ENCODE measurements at regions of chr22 and their contacts with region 1.

Region 1: DNA sequence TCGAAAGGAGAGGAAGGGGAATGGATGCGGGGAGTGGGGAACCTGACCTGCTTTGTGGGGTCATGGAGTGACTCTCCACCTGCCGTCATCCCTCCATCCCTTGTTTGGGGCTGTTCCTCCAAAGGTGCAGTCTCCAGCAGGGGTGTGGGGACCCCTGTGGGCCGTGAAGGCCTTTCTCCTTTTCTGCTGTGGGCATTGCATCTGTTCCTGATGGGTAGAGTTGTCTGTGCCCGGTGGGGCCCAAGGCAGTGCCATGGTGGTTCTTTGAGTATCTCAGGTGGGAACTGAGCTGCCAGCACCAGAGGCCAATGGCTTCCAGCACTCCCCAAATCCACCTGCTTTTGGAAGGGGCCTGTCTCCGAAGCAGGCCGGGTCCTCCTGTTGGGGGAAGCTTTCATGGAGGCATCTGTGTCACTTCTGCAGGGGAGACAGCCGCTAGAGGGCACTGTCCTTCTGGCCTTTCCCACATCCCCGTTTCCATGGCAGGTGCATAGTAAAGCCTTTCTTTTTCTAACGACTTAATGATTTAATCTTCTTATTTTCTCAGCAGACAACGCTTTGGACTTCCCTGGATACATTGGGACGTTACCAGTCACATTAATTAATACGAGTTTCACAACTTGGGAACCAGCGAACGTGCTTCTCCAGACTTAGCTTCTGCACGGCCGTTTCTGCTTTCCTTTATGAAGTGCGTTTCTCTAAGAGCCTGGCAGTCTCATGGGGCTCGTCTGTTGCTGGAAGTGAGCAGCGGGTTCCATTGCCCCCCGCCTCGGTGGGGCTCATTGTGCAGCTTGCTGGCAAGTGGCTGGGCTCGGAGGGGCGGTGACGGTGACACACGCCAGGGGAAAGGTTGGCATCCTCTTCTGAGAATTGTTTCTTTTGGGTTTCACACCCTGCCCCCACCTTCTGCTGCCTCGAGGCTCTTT is 57.1 kb downstream of the PARVB start:
- DNase-seq: peak; percentile 31 to 87
- H3K4me3 ChIP-seq: no peak overlapping the region
- H3K27ac ChIP-seq: no peak overlapping the region
- H3K4me1 ChIP-seq: peaks cover 0 to 9% (median 5%) of the 10 kb centered on the region in 4 experiments; a peak in 6 of 7 replicates
- H3K27me3 ChIP-seq: no peaks in the 10 kb centered on the region
- CTCF ChIP-seq: peak; percentile 84 to 92 (median 89)
- EP300 ChIP-seq: no peak
- POLR2A ChIP-seq: no peak
- RAD21 ChIP-seq: peak; percentile 87 to 88

Region 2: DNA sequence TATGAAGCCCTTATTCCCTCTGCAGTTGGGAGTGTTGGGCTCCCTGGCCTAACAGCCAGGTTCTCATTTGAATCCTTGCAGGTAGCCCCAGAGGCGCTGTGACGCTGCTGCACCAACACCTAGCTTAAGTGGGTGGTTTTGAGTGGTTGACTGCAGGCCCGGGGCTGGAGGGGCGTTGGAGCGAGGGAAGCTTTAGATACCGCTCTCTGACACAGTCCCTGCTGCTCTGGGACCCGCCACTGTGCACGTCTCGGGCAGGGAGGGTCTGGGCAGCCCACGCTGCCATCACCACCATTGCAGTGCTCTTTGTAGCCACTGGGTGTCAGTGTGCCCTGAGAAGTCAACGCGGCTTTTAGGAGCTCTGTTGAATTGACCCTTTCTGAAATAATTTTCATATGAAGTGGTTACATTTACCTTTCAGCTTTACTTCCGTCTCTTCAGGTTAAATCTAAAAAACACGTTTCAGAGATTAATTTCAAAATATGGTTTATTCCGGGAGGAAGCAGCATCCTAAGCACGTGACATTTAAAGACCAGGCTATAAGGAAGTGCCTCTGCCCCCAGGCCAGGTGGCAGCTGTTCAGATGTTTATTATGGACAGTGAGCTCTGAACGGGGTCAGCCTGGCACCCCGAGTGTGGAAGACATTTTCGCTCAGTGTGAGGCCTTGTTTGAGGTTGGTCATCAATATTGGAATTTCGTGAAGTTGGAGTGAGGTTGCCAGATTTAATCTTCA is 88.0 kb before region 1 on chr22:
- CTCF ChIA-PET with region 1: interaction called, 100 read pairs
- POLR2A ChIA-PET with region 1: interaction called, 4 read pairs
- DNase-seq: peak; percentile 38 to 82
- H3K4me3 ChIP-seq: no peak overlapping the region
- H3K27ac ChIP-seq: no peak overlapping the region
- H3K4me1 ChIP-seq: peaks cover 0 to 2% (median 1%) of the 10 kb centered on the region in 4 experiments; a peak in 3 of 7 replicates
- H3K27me3 ChIP-seq: no peaks in the 10 kb centered on the region
- CTCF ChIP-seq: peak; percentile 93 to 97 (median 95)
- EP300 ChIP-seq: no peak
- POLR2A ChIP-seq: no peak
- RAD21 ChIP-seq: peak; percentile 94 to 95

Region 3: GRCh38 chr22:44037519-44038370 is 43.5 kb before region 1 on chr22:
- CTCF ChIA-PET with region 1: interaction called, 13 read pairs
- POLR2A ChIA-PET with region 1: interaction called, 3 read pairs
- DNase-seq: no peak
- H3K4me3 ChIP-seq: no peak overlapping the region
- H3K27ac ChIP-seq: no peak overlapping the region
- H3K4me1 ChIP-seq: no peaks in the 10 kb centered on the region
- H3K27me3 ChIP-seq: no peaks in the 10 kb centered on the region
- CTCF ChIP-seq: no peak
- EP300 ChIP-seq: no peak
- POLR2A ChIP-seq: no peak
- RAD21 ChIP-seq: no peak

Region 4: GRCh38 chr22:44098083-44098739 is 17.0 kb after region 1 on chr22:
- CTCF ChIA-PET with region 1: interaction called, 25 read pairs
- POLR2A ChIA-PET with region 1: no interaction called
- DNase-seq: no peak
- H3K4me3 ChIP-seq: no peak overlapping the region
- H3K27ac ChIP-seq: no peak overlapping the region
- H3K4me1 ChIP-seq: peaks cover 0 to 4% (median 0%) of the 10 kb centered on the region in 4 experiments; a peak in 2 of 7 replicates
- H3K27me3 ChIP-seq: no peaks in the 10 kb centered on the region
- CTCF ChIP-seq: no peak
- EP300 ChIP-seq: no peak
- POLR2A ChIP-seq: no peak
- RAD21 ChIP-seq: no peak

Region 5: DNA sequence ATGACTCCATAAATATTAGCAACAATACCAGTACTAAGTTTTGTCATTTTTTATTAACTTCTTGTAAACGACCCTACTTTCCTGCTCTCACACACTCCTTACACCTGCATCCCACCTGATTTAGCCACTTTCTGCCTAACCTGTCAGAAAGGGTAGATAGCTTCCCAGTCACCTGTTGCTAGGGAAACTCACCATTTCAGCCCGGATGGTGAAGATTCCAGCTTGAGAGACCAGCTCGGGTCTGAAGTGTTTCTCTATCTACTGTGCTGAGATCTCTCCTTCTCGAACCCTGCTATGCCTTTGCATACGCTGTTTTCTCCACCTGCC is 99.5 kb after region 1 on chr22 and contains the start of gene PARVG:
- CTCF ChIA-PET with region 1: interaction called, 11 read pairs
- POLR2A ChIA-PET with region 1: no interaction called
- DNase-seq: no peak
- H3K4me3 ChIP-seq: no peak within 1 kb of the TSS
- H3K27ac ChIP-seq: no peak within 1 kb of the TSS
- H3K4me1 ChIP-seq: peaks cover 0 to 12% (median 9%) of the 10 kb centered on the region in 4 experiments; a peak in 5 of 7 replicates
- H3K27me3 ChIP-seq: no peaks in the 10 kb centered on the region
- CTCF ChIP-seq: no peak
- EP300 ChIP-seq: no peak
- POLR2A ChIP-seq: no peak
- RAD21 ChIP-seq: no peak
- total RNA-seq, gene PARVG: 0.37 and 0.50 TPM in 2 replicates

Region 6: DNA sequence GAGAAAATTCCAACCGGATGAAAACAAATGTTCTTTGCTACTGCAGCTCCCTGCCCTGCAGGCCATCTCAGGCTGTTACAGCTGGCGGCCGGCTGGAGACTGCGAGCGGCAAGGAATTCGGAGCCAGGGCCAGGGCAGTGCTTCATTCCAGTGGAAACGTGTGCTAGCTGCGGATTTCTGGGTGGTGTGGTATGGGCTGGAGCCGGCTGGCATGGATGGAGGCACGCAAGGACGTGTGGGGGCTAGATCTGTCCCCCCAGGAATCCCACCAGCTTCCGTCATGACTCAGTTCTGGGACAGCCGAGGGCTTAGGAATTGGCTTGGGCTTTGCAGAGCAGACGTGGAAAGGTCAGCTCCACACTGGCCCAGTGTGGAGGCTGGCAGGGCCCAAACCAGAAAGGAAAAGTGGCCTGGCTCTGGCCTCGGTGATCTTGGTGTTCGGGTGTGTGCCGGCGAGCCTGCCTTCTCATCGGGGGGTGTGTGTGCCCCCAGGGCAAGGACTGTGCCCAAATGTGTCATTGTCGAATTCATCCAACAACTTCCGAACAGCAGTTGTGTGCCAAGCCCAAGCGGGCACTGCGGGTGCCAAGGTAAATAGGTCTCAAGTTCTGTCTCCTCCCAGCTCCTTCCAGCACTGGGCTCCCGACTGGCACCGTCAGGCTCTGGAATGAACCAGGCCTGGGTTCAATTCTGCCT is 279.6 kb after region 1 on chr22:
- CTCF ChIA-PET with region 1: interaction called, 10 read pairs
- POLR2A ChIA-PET with region 1: no interaction called
- DNase-seq: no peak
- H3K4me3 ChIP-seq: no peak overlapping the region
- H3K27ac ChIP-seq: no peak overlapping the region
- H3K4me1 ChIP-seq: peaks cover 0 to 2% (median 0%) of the 10 kb centered on the region in 4 experiments; a peak in 2 of 7 replicates
- H3K27me3 ChIP-seq: no peaks in the 10 kb centered on the region
- CTCF ChIP-seq: peak in 1 of 3 experiments; percentile 4; a peak in 1 of 4 replicates
- EP300 ChIP-seq: no peak
- POLR2A ChIP-seq: no peak
- RAD21 ChIP-seq: peak in 1 of 2 experiments; percentile 3; a peak in 1 of 4 replicates

Measured in H1 (cell line).